Left cardiac atrium (tissue), 4 donors: ENCODE measurements at regions of chr13 and their contacts with region 1.

Region 1: DNA sequence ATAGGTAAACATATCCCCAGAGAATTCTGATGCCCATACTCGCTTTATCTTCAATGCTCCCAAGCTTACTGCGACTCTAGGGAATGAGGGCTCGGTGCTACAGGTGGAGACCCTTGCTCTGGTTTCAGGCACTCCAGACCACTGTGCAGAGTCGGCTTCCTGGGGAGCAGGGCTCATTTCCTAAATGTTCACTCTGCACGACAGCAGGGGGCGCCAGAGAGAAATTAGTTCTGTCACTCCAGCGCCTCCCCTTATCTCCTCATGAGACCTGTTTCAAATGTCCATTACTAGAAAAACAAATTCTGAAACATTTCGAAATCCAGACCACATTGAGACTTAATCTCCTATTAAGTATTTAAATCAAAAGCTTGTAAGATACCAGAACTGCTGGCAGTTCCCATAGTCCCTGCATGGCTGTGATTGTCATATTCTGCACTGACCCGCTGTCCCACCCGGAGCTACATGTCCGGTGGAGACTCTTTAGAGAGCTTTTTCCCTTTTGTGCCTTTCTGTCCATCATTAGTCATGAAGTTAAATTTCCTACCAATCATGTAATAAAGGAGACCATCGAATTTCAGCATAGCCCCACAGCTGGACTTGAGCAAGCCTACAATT is 22.4 kb downstream of the EPSTI1 start:
- DNase-seq: peak; percentile 85
- ATAC-seq: peak; percentile 84 to 90

Region 2: DNA sequence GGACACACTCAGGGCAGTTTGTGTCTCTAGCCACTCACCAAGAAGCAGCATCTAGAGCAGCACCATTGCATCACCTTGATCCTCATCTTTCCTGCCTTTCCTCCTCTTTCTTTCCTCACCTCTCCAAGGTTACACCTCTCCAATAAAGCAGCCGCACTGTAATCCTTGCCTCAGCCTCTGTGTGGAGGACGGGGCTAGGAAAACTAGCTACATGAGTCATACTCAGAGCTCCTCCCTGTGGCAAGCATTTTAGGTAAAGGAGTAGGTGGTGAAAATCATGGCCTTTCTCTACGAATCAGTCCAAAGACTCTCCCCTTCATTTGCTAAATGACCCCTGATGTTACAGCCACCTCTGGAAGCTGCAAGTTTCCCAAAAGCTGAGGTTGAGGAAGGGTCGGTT is 162.6 kb after region 1 on chr13:
- intact Hi-C with region 1: loop called (anchors 5 to 10 kb)
- DNase-seq: no peak
- ATAC-seq: peak; percentile 51 to 78

Region 3: GRCh38 chr13:43878892-43879754 is 909.5 kb after region 1 on chr13 and contains the start of gene CCDC122:
- intact Hi-C with region 1: loop called in 1 of 2 experiments (anchors 10 kb)
- DNase-seq: peak; percentile 91
- ATAC-seq: peak; percentile 92 to 94
- total RNA-seq, gene CCDC122: 3.2 to 10.0 TPM

Region 4: DNA sequence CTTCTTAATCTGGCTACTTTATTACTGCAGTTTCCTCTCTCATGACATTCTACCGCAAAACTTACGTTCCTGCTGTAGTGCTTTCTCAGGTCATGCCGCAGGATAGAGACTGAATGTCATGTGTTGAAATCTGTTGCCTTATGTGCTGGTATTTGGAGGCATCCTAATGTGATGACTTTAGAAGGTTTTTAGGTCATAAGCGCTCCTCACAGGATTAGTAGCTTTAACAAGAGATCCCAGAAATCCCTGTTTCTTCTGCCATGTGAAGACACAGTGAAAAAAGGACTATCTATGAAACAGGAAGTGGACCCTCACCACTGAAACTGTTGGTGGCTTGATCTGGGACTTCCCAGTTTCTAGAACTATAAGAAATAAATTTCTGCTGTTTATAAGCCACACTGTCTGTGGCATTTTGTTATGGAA is 1119.3 kb after region 1 on chr13:
- intact Hi-C with region 1: no loop called
- DNase-seq: no peak
- ATAC-seq: no peak